SK-N-SH (cell line): ENCODE measurements at regions of chr7 and their contacts with region 1.

Region 1: GRCh38 chr7:140653319-140654108 is 12.9 kb upstream of the DENND2A start:
- DNase-seq: peak; percentile 87
- H3K4me3 ChIP-seq: no peak overlapping the region
- H3K27ac ChIP-seq: no peak overlapping the region
- H3K4me1 ChIP-seq: peaks cover 0 to 3% of the 10 kb centered on the region in 2 experiments; a peak in 1 of 4 replicates
- H3K27me3 ChIP-seq: 0 out of 2 replicates have a peak, but pooled peaks cover 7% of the 10 kb centered on the region
- CTCF ChIP-seq: peak; percentile 98
- EP300 ChIP-seq: peak in 1 of 2 experiments; percentile 18; a peak in 1 of 4 replicates
- RAD21 ChIP-seq: peak; percentile 100

Region 2: GRCh38 chr7:140479062-140479738 is 174.3 kb before region 1 on chr7 and contains the start of gene MKRN1:
- CTCF ChIA-PET with region 1: interaction called, 43 read pairs
- POLR2A ChIA-PET with region 1: no interaction called
- DNase-seq: peak; percentile 99
- H3K4me3 ChIP-seq: peak within 1 kb of the TSS; percentile 65 to 81
- H3K27ac ChIP-seq: peak within 1 kb of the TSS; percentile 70 to 71
- H3K4me1 ChIP-seq: peaks cover 4 to 7% of the 10 kb centered on the region in 2 experiments; a peak in 2 of 4 replicates
- H3K27me3 ChIP-seq: peaks cover 8% of the 10 kb centered on the region; the same call in 1 of the 2 replicates
- CTCF ChIP-seq: no peak
- EP300 ChIP-seq: no peak
- RAD21 ChIP-seq: no peak
- polyA plus RNA-seq, gene MKRN1: 53.5 and 61.4 TPM in 2 replicates

Region 3: DNA sequence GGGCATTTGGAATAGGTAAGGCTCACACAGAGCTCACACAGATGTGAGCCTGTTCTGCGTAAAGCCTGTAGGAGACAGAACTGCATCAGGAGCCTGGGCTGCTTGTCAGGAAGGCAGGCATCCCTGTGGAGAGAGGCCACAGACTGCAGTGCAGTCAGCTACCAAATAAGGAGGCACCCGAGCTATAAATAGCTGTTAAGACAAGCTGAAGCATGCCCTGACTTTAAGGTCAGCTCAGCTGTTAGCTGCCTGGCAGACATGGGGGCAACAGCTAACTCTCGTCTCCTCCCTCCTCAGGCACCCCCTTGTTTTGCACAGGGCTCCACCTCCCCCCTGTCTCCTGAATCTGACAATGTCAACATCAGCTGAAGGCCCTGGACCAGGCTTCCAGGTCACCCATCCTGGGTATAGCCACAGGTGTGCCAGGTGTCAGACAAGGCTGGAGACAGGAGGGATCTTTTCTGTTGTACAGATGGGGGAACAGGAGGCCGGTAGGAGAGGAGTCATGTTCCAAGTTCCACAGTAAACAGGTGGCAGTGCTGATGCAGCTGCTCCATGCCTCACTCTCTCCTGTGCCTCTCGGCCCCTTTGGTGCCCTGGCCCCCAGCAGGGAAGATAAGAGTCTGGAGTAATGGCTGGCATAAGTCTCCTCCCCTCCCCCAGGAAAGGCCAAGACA is 146.6 kb before region 1 on chr7:
- CTCF ChIA-PET with region 1: interaction called, 433 read pairs
- POLR2A ChIA-PET with region 1: no interaction called
- DNase-seq: no peak
- H3K4me3 ChIP-seq: no peak overlapping the region; a peak in 1 of 4 replicates
- H3K27ac ChIP-seq: peak overlapping the region in 1 of 2 experiments; percentile 40; a peak in 1 of 4 replicates
- H3K4me1 ChIP-seq: peaks cover 3 to 12% of the 10 kb centered on the region in 2 experiments; a peak in 1 of 4 replicates
- H3K27me3 ChIP-seq: no peaks in the 10 kb centered on the region
- CTCF ChIP-seq: 0 out of 2 replicates have a peak, but pooled peaks have one; percentile 15
- EP300 ChIP-seq: no peak
- RAD21 ChIP-seq: peak; percentile 47

Region 4: GRCh38 chr7:140525743-140526142 is 127.8 kb before region 1 on chr7:
- CTCF ChIA-PET with region 1: interaction called, 433 read pairs
- POLR2A ChIA-PET with region 1: no interaction called
- DNase-seq: no peak
- H3K4me3 ChIP-seq: no peak overlapping the region
- H3K27ac ChIP-seq: no peak overlapping the region
- H3K4me1 ChIP-seq: no peaks in the 10 kb centered on the region
- H3K27me3 ChIP-seq: no peaks in the 10 kb centered on the region
- CTCF ChIP-seq: no peak
- EP300 ChIP-seq: no peak
- RAD21 ChIP-seq: no peak

Region 5: GRCh38 chr7:140541513-140542227 is 111.8 kb before region 1 on chr7:
- CTCF ChIA-PET with region 1: interaction called, 31 read pairs
- POLR2A ChIA-PET with region 1: no interaction called
- DNase-seq: peak; percentile 61
- H3K4me3 ChIP-seq: peak overlapping the region; percentile 19 to 31; a peak in 1 of 4 replicates
- H3K27ac ChIP-seq: peak overlapping the region; percentile 58 to 88
- H3K4me1 ChIP-seq: peaks cover 8 to 20% of the 10 kb centered on the region in 2 experiments; a peak in 3 of 4 replicates
- H3K27me3 ChIP-seq: no peaks in the 10 kb centered on the region
- CTCF ChIP-seq: no peak
- EP300 ChIP-seq: peak in 1 of 2 experiments; percentile 87; a peak in 1 of 4 replicates
- RAD21 ChIP-seq: no peak

Region 6: DNA sequence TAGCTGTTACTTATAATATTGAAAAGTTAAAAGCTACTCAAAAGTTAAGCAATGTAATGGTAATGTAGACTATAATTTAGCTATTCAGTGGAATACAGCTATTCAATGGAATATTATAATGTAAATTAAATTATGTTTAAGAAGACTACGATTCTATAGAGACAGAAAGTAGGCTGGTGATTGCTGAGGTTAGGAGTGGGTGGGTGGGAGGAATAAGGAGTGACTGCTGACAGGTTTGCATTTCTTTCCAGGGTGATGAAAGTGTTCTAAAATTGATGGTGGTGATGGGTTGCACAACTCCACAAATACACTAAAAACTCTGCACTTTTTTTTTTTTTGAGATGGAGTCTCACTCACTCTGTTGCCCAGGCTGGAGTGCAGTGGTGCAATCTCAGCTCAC is 34.3 kb before region 1 on chr7:
- CTCF ChIA-PET with region 1: interaction called, 11 read pairs
- POLR2A ChIA-PET with region 1: no interaction called
- DNase-seq: no peak
- H3K4me3 ChIP-seq: no peak overlapping the region
- H3K27ac ChIP-seq: no peak overlapping the region
- H3K4me1 ChIP-seq: peaks cover 0 to 2% of the 10 kb centered on the region in 2 experiments; a peak in 1 of 4 replicates
- H3K27me3 ChIP-seq: no peaks in the 10 kb centered on the region
- CTCF ChIP-seq: no peak
- EP300 ChIP-seq: no peak
- RAD21 ChIP-seq: no peak

Region 7: DNA sequence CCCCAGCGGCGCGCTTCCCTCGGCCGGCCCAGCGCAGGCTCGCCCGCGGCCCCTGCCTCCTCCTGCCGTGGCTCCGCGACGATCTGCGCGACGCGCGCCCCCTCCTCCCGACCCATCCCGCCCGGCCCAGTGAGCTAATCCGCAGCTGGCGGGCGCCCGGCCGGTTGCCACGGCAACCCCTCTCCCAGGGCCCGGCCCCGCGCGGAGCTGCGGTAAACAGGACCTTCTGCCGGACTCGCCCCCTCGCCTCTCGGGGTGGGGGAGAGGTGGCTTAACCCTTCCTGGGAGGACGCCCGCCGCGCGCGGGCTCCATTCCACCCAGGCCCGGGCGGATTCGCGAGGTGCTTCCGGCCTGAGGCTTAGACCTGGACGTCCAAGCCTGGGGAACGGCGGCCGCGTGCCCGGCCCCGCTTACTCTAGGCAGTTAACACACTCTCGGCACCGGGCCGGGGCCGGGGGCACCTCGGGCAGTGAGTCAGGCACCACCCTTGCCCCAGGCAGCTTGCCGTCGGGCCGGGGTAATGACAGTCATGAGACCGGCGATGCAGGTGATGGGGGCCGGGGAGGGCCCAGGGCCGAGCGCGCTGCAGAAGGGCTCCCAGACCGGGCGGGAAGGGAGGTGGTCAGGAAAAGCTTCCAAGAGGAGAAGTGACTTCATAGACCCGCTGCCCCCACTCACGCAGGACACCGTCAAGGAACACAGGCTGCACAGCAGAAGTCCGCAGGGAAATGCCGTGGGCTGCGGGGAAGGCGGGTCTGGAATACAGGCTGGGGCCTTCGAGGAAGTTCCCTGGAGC is 12.6 kb before region 1 on chr7 and contains the start of gene DENND2A:
- CTCF ChIA-PET with region 1: interaction called, 42 read pairs
- POLR2A ChIA-PET with region 1: no interaction called
- DNase-seq: peak; percentile 99
- H3K4me3 ChIP-seq: peak within 1 kb of the TSS; percentile 58 to 71
- H3K27ac ChIP-seq: peak within 1 kb of the TSS in 1 of 2 experiments; percentile 63; a peak in 2 of 4 replicates
- H3K4me1 ChIP-seq: peaks cover 0 to 16% of the 10 kb centered on the region in 2 experiments; a peak in 1 of 4 replicates
- H3K27me3 ChIP-seq: no peaks in the 10 kb centered on the region
- CTCF ChIP-seq: no peak
- EP300 ChIP-seq: peak in 1 of 2 experiments; percentile 39; a peak in 1 of 4 replicates
- RAD21 ChIP-seq: no peak
- polyA plus RNA-seq, gene DENND2A: 2.1 and 3.5 TPM in 2 replicates

Region 8: DNA sequence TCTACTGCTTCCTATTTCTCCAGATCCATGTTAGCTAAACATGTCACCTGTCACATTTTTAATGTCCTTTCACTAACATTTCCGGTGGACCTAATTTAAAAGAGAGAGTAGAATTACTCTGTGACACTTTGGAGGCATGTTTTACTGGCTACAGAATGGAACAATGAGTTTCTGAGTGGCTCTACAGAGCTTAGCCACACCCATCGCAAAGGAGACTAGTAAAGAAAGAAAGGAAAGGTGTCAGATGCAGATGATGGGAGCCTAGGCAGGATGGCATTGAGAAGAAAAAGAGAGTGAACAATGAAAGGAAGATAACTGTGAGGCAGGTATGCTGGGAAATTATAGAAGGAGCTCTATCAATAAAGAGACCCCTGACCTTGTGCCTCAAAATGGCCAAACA is 78.9 kb after region 1 on chr7:
- CTCF ChIA-PET with region 1: no interaction called
- POLR2A ChIA-PET with region 1: no interaction called
- DNase-seq: no peak
- H3K4me3 ChIP-seq: no peak overlapping the region
- H3K27ac ChIP-seq: no peak overlapping the region
- H3K4me1 ChIP-seq: peaks cover 0 to 5% of the 10 kb centered on the region in 2 experiments; a peak in 1 of 4 replicates
- H3K27me3 ChIP-seq: no peaks in the 10 kb centered on the region
- CTCF ChIP-seq: no peak
- EP300 ChIP-seq: no peak
- RAD21 ChIP-seq: no peak